ENCODE measurements at regions of chr16 and their contacts with region 1.

Region 1: GRCh38 chr16:24010440-24011089 is 174.8 kb downstream of the PRKCB start:
- DNase-seq: peak; percentile 93
- ATAC-seq: peak; percentile 35
- H3K4me3 Mint-ChIP-seq: no peak overlapping the region
- H3K27ac Mint-ChIP-seq: peak overlapping the region; percentile 35
- H3K4me1 Mint-ChIP-seq: peaks cover 49% of the 10 kb centered on the region
- H3K27me3 Mint-ChIP-seq: no peaks in the 10 kb centered on the region
- CTCF ChIP-seq: peak; percentile 82

Region 2: DNA sequence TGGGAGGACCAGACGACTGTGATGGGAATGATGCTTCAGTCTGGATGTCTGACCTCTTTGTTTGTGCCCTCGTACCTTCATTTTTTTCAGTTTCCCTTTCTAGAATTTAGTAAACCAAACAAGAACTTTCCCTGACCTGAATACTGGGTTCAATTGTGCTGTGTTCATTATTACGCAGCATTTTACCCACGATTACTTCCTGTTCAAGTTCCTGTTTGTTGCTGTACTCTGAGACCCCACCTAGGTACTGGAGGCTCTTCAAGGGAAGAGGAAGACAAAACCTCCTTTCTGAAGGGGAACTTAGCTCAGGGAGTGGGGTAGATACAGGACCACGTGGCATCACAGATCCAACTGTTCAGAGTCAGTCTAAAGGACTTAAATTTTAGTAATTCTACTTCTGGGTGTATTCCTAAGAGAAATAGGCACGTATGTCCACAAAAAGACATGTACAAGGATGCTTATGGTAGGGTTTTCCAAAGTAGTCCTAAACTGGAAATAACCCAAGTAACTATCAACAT is 184.0 kb before region 1 on chr16:
- CTCF ChIA-PET with region 1: interaction called, 16 read pairs
- POLR2A ChIA-PET with region 1: no interaction called
- intact Hi-C with region 1: no loop called
- DNase-seq: peak; percentile 17
- ATAC-seq: peak; percentile 61
- H3K4me3 Mint-ChIP-seq: peak overlapping the region; percentile 46
- H3K27ac Mint-ChIP-seq: peak overlapping the region; percentile 85
- H3K4me1 Mint-ChIP-seq: peaks cover 26% of the 10 kb centered on the region
- H3K27me3 Mint-ChIP-seq: no peaks in the 10 kb centered on the region
- CTCF ChIP-seq: no peak

Region 3: DNA sequence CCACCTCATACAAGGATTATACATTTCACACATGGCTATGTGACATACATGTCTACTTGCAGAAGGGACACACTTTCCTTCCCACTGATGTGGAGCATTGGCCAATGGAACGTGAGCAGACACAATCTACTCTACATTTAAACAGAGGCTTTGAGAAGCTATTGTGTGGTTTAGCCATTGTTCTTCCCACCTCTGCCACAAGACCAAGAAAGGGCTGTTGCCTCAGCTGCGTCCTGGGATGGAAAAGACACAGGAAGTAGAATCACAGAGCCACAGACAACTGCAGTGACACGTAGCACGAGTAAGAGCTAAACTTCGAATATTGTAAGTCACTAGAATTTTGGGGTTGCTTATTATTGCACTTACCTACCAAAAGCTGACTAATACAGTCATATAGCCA is 141.5 kb before region 1 on chr16:
- CTCF ChIA-PET with region 1: interaction called, 11 read pairs
- POLR2A ChIA-PET with region 1: no interaction called
- intact Hi-C with region 1: no loop called
- DNase-seq: peak; percentile 69
- ATAC-seq: peak; percentile 88
- H3K4me3 Mint-ChIP-seq: no peak overlapping the region
- H3K27ac Mint-ChIP-seq: peak overlapping the region; percentile 87
- H3K4me1 Mint-ChIP-seq: peaks cover 73% of the 10 kb centered on the region
- H3K27me3 Mint-ChIP-seq: no peaks in the 10 kb centered on the region
- CTCF ChIP-seq: no peak

Region 4: GRCh38 chr16:23930791-23931190 is 79.8 kb before region 1 on chr16:
- CTCF ChIA-PET with region 1: interaction called, 11 read pairs
- POLR2A ChIA-PET with region 1: no interaction called
- intact Hi-C with region 1: no loop called
- DNase-seq: no peak
- ATAC-seq: no peak
- H3K4me3 Mint-ChIP-seq: no peak overlapping the region
- H3K27ac Mint-ChIP-seq: no peak overlapping the region
- H3K4me1 Mint-ChIP-seq: peaks cover 32% of the 10 kb centered on the region
- H3K27me3 Mint-ChIP-seq: no peaks in the 10 kb centered on the region
- CTCF ChIP-seq: no peak

Region 5: DNA sequence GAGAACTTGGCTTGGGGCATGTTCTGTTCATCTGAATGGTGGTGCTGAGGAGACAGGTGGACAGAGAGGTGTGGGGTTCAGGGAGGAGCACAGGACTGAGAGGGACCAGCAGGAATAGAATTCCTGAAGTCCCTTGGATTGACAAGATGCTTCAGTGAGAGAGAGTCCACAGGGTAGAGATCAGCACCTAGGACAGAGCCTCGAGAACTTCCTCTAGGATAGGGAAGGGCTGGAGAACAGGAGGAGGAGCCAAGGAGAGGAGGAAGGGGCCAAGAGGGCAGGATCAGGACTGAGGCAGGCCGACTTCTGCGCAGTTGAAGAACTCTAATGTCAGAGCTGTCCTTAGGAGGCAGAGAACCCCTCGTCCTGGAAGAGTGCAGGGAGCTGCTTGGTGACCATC is 36.3 kb before region 1 on chr16:
- CTCF ChIA-PET with region 1: interaction called, 10 read pairs
- POLR2A ChIA-PET with region 1: no interaction called
- intact Hi-C with region 1: no loop called
- DNase-seq: no peak
- ATAC-seq: no peak
- H3K4me3 Mint-ChIP-seq: no peak overlapping the region
- H3K27ac Mint-ChIP-seq: no peak overlapping the region
- H3K4me1 Mint-ChIP-seq: peaks cover 75% of the 10 kb centered on the region
- H3K27me3 Mint-ChIP-seq: no peaks in the 10 kb centered on the region
- CTCF ChIP-seq: no peak

Region 6: DNA sequence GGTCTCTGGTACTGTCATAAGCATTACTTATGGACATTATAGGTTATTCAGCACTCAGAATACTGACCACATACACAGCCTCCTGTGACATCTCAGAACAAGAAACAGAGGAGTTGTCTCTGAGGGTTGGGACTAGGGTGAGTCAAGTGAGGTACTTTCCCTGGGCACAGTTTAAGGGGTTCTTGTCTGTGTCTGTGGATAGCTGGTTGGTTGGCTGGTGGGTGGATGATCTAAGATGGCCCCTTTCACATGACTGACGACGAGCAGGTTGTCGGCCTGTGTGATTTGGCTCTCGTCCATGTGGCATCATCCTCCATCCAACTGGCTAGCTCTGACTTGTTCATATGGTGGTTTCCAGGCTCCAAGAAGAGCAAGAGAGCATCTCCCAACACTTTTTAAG is 10.9 kb before region 1 on chr16:
- CTCF ChIA-PET with region 1: interaction called, 41 read pairs
- POLR2A ChIA-PET with region 1: interaction called, 3 read pairs
- intact Hi-C with region 1: no loop called
- DNase-seq: peak; percentile 91
- ATAC-seq: peak; percentile 98
- H3K4me3 Mint-ChIP-seq: no peak overlapping the region
- H3K27ac Mint-ChIP-seq: peak overlapping the region; percentile 84
- H3K4me1 Mint-ChIP-seq: peaks cover 37% of the 10 kb centered on the region
- H3K27me3 Mint-ChIP-seq: no peaks in the 10 kb centered on the region
- CTCF ChIP-seq: no peak

Region 7: GRCh38 chr16:24036614-24037013 is 26.0 kb after region 1 on chr16:
- CTCF ChIA-PET with region 1: interaction called, 22 read pairs
- POLR2A ChIA-PET with region 1: interaction called, 3 read pairs
- intact Hi-C with region 1: no loop called
- DNase-seq: peak; percentile 46
- ATAC-seq: peak; percentile 60
- H3K4me3 Mint-ChIP-seq: no peak overlapping the region
- H3K27ac Mint-ChIP-seq: peak overlapping the region; percentile 7
- H3K4me1 Mint-ChIP-seq: peaks cover 41% of the 10 kb centered on the region
- H3K27me3 Mint-ChIP-seq: no peaks in the 10 kb centered on the region
- CTCF ChIP-seq: peak; percentile 81